Body of pancreas (tissue), 4 donors: ENCODE measurements at regions of chr9 and their contacts with region 1.

Region 1: GRCh38 chr9:36023260-36024048 is 13.3 kb upstream of the RECK start:
- DNase-seq: peak; percentile 73 to 78 (median 76)
- ATAC-seq: peak; percentile 77
- H3K4me3 ChIP-seq: no peak overlapping the region
- H3K27ac ChIP-seq: no peak overlapping the region
- H3K4me1 ChIP-seq: no peaks in the 10 kb centered on the region
- H3K27me3 ChIP-seq: no peaks in the 10 kb centered on the region
- CTCF ChIP-seq: peak; percentile 44 to 88 (median 80)
- POLR2A ChIP-seq: no peak

Region 2: GRCh38 chr9:35690431-35691333 is 332.8 kb before region 1 on chr9:
- intact Hi-C with region 1: no loop called
- DNase-seq: peak; percentile 60 to 71 (median 69)
- ATAC-seq: peak; percentile 63
- H3K4me3 ChIP-seq: peak overlapping the region; percentile 86 to 88
- H3K27ac ChIP-seq: peak overlapping the region; percentile 69 to 90 (median 82)
- H3K4me1 ChIP-seq: peaks cover 20% of the 10 kb centered on the region
- H3K27me3 ChIP-seq: no peaks in the 10 kb centered on the region
- CTCF ChIP-seq: no peak
- POLR2A ChIP-seq: peak in 2 of 3 donors; percentile 45 to 61

Region 3: GRCh38 chr9:35903049-35903448 is 120.4 kb before region 1 on chr9:
- intact Hi-C with region 1: loop called (anchors 10 kb)
- DNase-seq: peak in 3 of 4 donors; percentile 40 to 57 (median 45)
- ATAC-seq: no peak
- H3K4me3 ChIP-seq: no peak overlapping the region
- H3K27ac ChIP-seq: no peak overlapping the region
- H3K4me1 ChIP-seq: peaks cover 37% of the 10 kb centered on the region
- H3K27me3 ChIP-seq: no peaks in the 10 kb centered on the region
- CTCF ChIP-seq: peak; percentile 62 to 86 (median 69)
- POLR2A ChIP-seq: no peak

Region 4: DNA sequence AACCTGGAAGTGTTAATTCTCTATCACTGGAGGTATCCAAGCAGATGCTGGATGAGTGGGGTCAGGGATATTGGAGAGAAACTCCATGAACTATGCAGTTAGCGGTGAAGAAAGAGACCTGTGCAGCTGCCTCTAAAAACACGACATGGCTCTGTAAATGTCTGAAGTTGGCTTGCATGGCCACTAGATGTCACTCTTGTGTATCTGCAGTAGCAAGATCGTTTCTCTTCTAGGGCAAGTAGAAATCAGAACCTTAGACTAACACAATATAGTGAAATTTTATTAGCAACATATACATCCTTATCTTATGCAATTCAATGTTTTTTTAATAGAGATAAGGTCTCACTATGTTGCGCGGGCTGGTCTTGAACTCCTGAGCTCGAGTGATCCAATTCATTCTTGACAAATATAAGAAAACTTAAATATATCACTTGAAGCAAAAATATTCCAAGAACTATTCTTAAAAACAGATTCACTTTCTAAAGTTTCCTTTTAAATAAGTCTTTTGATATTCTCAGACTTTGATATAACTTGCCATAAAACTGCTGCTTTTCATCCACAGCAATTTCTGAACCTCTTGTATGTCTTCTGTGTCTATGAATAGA is 68.4 kb before region 1 on chr9:
- intact Hi-C with region 1: loop called (anchors 5 kb)
- DNase-seq: peak; percentile 62 to 79 (median 74)
- ATAC-seq: peak; percentile 89
- H3K4me3 ChIP-seq: no peak overlapping the region
- H3K27ac ChIP-seq: no peak overlapping the region
- H3K4me1 ChIP-seq: no peaks in the 10 kb centered on the region
- H3K27me3 ChIP-seq: no peaks in the 10 kb centered on the region
- CTCF ChIP-seq: peak; percentile 46 to 89 (median 80)
- POLR2A ChIP-seq: no peak

Region 5: DNA sequence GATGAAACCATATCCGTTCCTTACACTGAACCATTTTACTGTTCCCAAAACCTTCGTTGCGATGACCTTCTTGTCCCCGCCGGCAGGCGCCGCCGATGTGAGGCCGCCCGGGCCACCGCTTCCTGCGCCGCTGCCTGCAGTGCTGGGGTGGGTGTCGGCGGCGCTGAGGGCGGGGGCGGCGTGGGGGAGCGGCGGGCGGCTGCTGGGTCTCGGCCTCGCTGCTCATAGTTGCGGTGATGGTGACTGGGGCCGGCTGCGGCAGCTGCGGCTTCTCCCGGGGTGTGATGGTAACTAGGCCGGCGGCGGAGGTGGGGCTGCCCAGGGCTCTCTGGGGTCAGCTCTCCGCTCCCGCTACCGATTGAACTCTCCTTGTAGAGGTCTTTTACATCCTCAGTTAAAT is 51.4 kb before region 1 on chr9:
- intact Hi-C with region 1: no loop called
- DNase-seq: no peak
- ATAC-seq: no peak
- H3K4me3 ChIP-seq: no peak overlapping the region
- H3K27ac ChIP-seq: no peak overlapping the region
- H3K4me1 ChIP-seq: no peaks in the 10 kb centered on the region
- H3K27me3 ChIP-seq: no peaks in the 10 kb centered on the region
- CTCF ChIP-seq: no peak
- POLR2A ChIP-seq: no peak

Region 6: DNA sequence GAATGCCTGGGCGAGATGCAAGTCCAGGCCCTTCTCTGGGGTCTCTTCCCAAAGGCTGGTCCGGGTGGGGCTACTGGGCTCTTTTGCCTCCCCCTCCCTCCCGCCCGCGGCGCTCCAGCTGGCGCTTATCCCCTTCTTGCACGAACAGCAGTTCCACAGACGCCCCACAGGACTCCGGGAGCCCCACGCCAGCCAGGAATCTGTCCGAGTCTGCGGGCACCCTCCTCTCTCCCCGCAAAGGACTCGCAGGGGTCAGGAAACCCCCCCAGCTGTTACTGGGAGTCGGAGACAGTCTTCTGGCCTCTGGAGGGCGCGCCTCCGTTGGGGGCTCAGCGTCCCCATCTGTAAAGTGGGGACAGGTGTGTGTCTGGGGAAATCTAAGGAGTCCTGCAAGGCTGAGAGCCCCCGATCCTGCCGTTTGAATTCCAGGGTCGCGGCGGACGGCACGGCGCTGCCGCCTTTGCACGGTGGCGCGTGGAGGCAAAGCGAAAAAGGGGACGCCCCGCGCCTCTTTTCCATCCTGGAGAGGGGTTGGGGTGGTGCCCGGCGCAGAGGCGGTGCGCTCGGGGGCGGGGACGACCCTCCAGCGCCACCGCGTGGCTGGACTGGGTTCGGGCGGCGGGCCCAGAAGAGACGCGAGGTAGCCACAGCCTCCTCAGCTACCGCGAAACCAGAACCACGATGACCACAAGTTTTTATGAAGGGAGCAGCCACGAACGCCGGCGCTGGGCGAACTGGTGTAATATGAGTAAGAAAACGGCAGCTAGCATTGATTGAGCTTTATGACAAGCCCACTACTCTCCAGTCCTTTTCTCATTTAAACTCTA is 142.9 kb after region 1 on chr9:
- intact Hi-C with region 1: no loop called
- DNase-seq: peak; percentile 75 to 83 (median 80)
- ATAC-seq: peak; percentile 90
- H3K4me3 ChIP-seq: no peak overlapping the region
- H3K27ac ChIP-seq: no peak overlapping the region
- H3K4me1 ChIP-seq: peaks cover 12% of the 10 kb centered on the region
- H3K27me3 ChIP-seq: no peaks in the 10 kb centered on the region
- CTCF ChIP-seq: peak; percentile 83 to 97 (median 91)
- POLR2A ChIP-seq: no peak

Region 7: GRCh38 chr9:36284226-36284625 is 260.8 kb after region 1 on chr9:
- intact Hi-C with region 1: no loop called
- DNase-seq: no peak
- ATAC-seq: no peak
- H3K4me3 ChIP-seq: no peak overlapping the region
- H3K27ac ChIP-seq: no peak overlapping the region
- H3K4me1 ChIP-seq: no peaks in the 10 kb centered on the region
- H3K27me3 ChIP-seq: no peaks in the 10 kb centered on the region
- CTCF ChIP-seq: no peak
- POLR2A ChIP-seq: no peak